Esophagus squamous epithelium (tissue), 5 donors: ENCODE measurements at regions of chr11 and their contacts with region 1.

Region 1: GRCh38 chr11:45371251-45372115 is 85.3 kb upstream of the SYT13 start:
- DNase-seq: no peak
- H3K4me3 ChIP-seq: peak overlapping the region in 1 of 4 donors; percentile 15
- H3K27ac ChIP-seq: no peak overlapping the region
- H3K4me1 ChIP-seq: peaks cover 0 to 10% (median 8%) of the 10 kb centered on the region in 3 donors
- H3K27me3 ChIP-seq: peaks cover 0 to 69% (median 0%) of the 10 kb centered on the region in 4 donors
- CTCF ChIP-seq: peak; percentile 50 to 88 (median 76)
- POLR2A ChIP-seq: no peak

Region 2: DNA sequence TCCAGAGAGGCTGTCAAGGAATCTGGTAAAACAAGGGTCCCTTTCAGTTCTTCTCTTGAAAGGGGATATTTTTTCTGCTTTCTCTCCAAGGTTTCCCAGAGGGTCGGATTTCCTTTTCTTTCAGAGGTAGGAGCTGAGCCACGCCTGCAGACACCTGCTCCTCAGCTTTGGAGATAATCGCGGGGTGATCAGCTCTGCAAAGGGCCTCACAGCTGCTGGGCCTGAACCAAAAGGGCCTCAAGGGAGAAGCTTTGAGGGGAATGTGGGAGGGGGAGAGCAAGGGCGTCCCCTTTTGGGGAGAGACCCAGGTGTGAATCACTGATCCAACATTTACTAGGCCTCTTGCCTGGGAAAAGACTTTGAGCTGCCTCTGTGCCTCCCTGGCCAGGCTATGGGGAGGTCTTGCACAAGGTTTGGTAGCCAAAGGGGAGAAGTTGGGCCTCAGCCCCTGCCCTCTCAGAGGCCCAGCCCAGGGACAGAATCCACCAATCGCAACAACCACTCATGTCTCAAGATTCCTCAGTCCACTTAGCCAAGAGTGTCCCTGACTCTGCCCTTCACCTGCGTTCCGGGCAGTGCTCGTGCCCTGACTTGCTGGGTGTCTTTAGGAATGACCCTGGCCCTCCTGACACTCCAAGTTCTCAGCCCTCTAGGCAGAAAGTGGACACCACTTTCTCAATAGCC is 406.8 kb before region 1 on chr11:
- intact Hi-C with region 1: no loop called
- DNase-seq: no peak
- H3K4me3 ChIP-seq: no peak overlapping the region
- H3K27ac ChIP-seq: no peak overlapping the region
- H3K4me1 ChIP-seq: peaks cover 0 to 17% (median 4%) of the 10 kb centered on the region in 3 donors
- H3K27me3 ChIP-seq: no peaks in the 10 kb centered on the region
- CTCF ChIP-seq: no peak
- POLR2A ChIP-seq: no peak

Region 3: DNA sequence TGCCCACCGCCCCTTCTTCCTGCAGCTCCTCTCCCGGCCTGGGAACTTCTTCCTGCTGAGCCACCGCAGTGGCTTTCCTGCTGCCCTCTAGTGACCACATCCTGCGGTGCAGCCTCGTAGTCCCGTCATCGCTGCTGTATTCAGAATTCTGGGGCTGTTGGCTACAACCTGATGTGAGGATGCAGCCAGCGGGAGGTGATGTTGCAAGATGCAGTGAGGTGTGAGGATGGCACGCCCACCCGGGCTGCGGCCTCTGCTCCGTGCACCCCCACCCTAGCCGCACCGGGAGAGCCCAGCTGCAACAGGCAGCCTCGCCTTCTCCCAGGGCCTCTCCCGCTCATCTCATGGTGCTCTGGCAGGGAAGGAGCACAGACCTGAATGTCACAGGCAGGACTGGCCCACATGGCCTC is 283.9 kb after region 1 on chr11:
- intact Hi-C with region 1: loop called (anchors 10 kb)
- DNase-seq: no peak
- H3K4me3 ChIP-seq: no peak overlapping the region
- H3K27ac ChIP-seq: no peak overlapping the region
- H3K4me1 ChIP-seq: peaks cover 0 to 28% (median 12%) of the 10 kb centered on the region in 3 donors
- H3K27me3 ChIP-seq: peaks cover 0 to 59% (median 0%) of the 10 kb centered on the region in 4 donors
- CTCF ChIP-seq: peak; percentile 42 to 91 (median 72)
- POLR2A ChIP-seq: no peak

Region 4: DNA sequence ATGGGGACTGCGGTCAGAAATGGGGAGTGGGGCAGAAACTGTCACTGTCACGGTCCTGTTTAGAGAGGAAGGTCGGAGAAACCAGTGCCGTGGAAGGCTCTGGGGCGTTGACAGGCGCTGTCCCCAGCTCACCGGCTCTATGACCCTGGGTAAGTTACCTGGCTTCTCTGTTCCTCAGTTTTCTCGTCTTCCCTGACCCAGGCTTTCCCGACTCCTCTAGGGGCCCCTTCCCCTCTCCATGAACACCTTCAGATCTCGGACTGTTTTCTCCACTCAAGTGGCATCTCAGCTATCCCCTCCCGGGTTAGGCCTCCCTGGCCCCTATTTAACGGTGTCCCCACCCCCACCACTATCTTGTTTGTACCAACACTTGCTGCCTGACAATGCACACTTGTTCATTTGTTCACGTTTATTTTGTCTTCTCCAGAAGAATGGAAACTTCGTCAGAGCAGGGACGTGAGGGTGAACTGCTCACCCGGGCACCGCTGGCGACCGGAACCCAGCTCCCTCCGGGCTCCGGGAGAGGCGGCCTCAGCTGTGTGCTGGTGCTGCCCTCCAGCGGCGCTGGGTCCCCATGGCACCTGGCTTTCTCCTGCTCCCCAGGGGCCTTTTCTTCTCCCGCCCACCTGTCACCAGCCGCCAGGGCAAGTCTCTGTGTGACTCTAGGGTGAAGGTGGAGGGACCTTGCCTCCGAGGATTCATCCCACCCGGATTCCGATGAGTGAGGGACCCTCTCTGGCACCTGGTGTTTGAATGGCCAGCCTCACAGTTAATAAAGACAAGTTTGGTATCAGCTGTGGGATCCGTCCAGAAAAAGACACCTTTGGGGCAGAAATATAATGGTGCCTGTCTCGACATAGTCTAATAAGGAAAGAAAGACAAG is 400.3 kb after region 1 on chr11:
- intact Hi-C with region 1: loop called (anchors 10 kb)
- DNase-seq: no peak
- H3K4me3 ChIP-seq: peak overlapping the region; percentile 33 to 72 (median 56)
- H3K27ac ChIP-seq: peak overlapping the region; percentile 21 to 73 (median 68)
- H3K4me1 ChIP-seq: peaks cover 3 to 10% (median 5%) of the 10 kb centered on the region in 3 donors
- H3K27me3 ChIP-seq: peaks cover 0 to 15% (median 0%) of the 10 kb centered on the region in 4 donors
- CTCF ChIP-seq: peak; percentile 87 to 94 (median 91)
- POLR2A ChIP-seq: no peak